RWPE1 (cell line): ENCODE measurements at regions of chr11 and their contacts with region 1.

Region 1: DNA sequence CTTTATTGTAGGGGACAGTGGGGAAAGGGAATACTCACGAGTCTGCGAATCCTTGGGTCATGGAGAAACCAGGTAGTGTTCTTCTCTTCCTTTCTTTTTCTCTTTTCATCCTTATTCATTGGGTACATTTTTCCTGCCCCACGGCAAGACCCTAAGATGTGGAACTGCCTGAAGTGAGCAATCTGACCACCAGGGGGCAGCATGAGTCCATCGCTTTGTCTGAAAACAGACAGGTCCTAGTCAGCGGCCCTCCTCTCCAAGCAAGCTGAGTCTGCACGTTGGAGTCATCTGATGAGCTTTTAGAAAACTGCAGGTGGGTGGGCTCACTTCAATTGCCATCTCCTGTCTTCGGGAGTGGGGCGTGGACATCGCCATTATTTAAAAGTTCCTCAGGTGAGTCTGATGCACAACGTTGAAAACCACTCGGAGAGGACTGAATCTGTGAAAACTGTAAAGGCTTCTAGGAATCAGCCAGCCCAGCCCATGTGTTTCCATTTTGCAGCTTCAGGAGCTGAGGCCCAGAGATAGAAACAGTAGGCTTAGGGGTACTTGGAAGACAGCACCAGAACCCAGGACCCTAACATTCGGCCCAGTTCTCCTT is 34.0 kb upstream of the FBXO3 start:
- DNase-seq: peak; percentile 72
- H3K27ac ChIP-seq: no peak overlapping the region
- CTCF ChIP-seq: peak; percentile 91

Region 2: GRCh38 chr11:33819278-33819677 is 10.9 kb after region 1 on chr11:
- CTCF ChIA-PET with region 1: interaction called, 18 read pairs
- POLR2A ChIA-PET with region 1: no interaction called
- DNase-seq: no peak
- H3K27ac ChIP-seq: no peak overlapping the region
- CTCF ChIP-seq: no peak

Region 3: DNA sequence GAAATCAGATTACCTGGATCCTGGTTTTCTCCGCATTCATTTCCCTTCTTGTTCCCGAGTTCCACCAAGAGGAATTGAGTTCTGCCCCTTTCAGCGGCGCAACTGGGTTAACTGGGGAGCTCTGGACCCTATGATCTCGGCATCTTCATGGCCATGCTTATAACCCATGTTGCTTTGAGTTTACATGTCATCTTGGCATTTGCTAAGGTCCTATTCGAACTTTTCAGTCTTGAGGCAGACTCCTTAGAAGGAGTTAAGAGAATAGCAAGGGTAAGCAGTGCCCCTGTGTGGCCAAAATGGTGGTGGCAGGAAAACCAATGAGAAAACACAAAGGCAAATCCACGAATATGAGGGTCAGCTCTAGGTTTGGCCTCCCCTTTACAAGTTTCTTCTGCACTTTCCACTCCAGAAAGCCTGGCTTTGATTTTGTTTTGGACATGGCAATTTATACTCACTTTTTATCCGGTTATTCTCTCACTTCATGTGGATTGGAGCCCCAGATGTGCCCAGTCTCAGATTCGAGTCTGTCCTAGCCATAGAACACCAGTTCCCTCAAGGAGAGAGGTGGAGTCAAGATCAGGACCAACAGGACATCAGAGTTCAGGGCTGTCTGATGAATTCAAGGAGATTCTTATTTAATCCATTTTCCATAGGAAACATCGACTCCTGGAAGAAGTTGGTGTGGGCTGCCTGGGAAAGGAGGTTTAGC is 21.3 kb after region 1 on chr11:
- CTCF ChIA-PET with region 1: interaction called, 39 read pairs
- POLR2A ChIA-PET with region 1: interaction called, 4 read pairs
- DNase-seq: peak; percentile 72
- H3K27ac ChIP-seq: no peak overlapping the region
- CTCF ChIP-seq: peak; percentile 88

Region 4: GRCh38 chr11:33875621-33876294 is 67.4 kb after region 1 on chr11:
- CTCF ChIA-PET with region 1: no interaction called
- POLR2A ChIA-PET with region 1: no interaction called
- DNase-seq: no peak
- H3K27ac ChIP-seq: no peak overlapping the region
- CTCF ChIP-seq: no peak

Region 5: GRCh38 chr11:34280945-34281872 is 472.9 kb after region 1 on chr11:
- CTCF ChIA-PET with region 1: no interaction called
- POLR2A ChIA-PET with region 1: no interaction called
- DNase-seq: no peak
- H3K27ac ChIP-seq: no peak overlapping the region
- CTCF ChIP-seq: no peak